Activated CD8-positive, alpha-beta memory T cell treated with anti-CD3 and anti-CD28 coated beads, Interleukin-2, amount 10 ng/mL, durations not matched to agents 7 days and 5 days (primary cell): ENCODE measurements at regions of chr2 and their contacts with region 1.

Region 1: GRCh38 chr2:147910990-147911473 is 66.2 kb downstream of the ACVR2A start:
- DNase-seq: no peak
- ATAC-seq: no peak
- H3K4me3 Mint-ChIP-seq: no peak overlapping the region
- H3K27ac Mint-ChIP-seq: no peak overlapping the region
- H3K4me1 Mint-ChIP-seq: peaks cover 2% of the 10 kb centered on the region
- H3K27me3 Mint-ChIP-seq: peaks cover 2% of the 10 kb centered on the region

Region 2: GRCh38 chr2:147045113-147045512 is 865.9 kb before region 1 on chr2:
- CTCF ChIA-PET with region 1: interaction called, 20 read pairs
- DNase-seq: peak; percentile 43
- ATAC-seq: no peak
- H3K4me3 Mint-ChIP-seq: no peak overlapping the region
- H3K27ac Mint-ChIP-seq: no peak overlapping the region
- H3K4me1 Mint-ChIP-seq: no peaks in the 10 kb centered on the region
- H3K27me3 Mint-ChIP-seq: no peaks in the 10 kb centered on the region

Region 3: GRCh38 chr2:147082850-147083522 is 828.0 kb before region 1 on chr2:
- CTCF ChIA-PET with region 1: interaction called, 41 read pairs
- DNase-seq: peak; percentile 47
- ATAC-seq: peak; percentile 42
- H3K4me3 Mint-ChIP-seq: no peak overlapping the region
- H3K27ac Mint-ChIP-seq: no peak overlapping the region
- H3K4me1 Mint-ChIP-seq: peaks cover 1% of the 10 kb centered on the region
- H3K27me3 Mint-ChIP-seq: no peaks in the 10 kb centered on the region

Region 4: GRCh38 chr2:147829106-147829505 is 81.9 kb before region 1 on chr2:
- CTCF ChIA-PET with region 1: no interaction called
- DNase-seq: no peak
- ATAC-seq: no peak
- H3K4me3 Mint-ChIP-seq: no peak overlapping the region
- H3K27ac Mint-ChIP-seq: no peak overlapping the region
- H3K4me1 Mint-ChIP-seq: no peaks in the 10 kb centered on the region
- H3K27me3 Mint-ChIP-seq: peaks cover 5% of the 10 kb centered on the region

Region 5: GRCh38 chr2:147945660-147946059 is 34.6 kb after region 1 on chr2:
- CTCF ChIA-PET with region 1: no interaction called
- DNase-seq: no peak
- ATAC-seq: no peak
- H3K4me3 Mint-ChIP-seq: no peak overlapping the region
- H3K27ac Mint-ChIP-seq: no peak overlapping the region
- H3K4me1 Mint-ChIP-seq: no peaks in the 10 kb centered on the region
- H3K27me3 Mint-ChIP-seq: no peaks in the 10 kb centered on the region